ENCODE measurements at regions of chr1 and their contacts with region 1.

Region 1: GRCh38 chr1:145978854-145979759 is 14.6 kb downstream of the POLR3GL start:
- DNase-seq: peak; percentile 87
- H3K4me3 Mint-ChIP-seq: no peak overlapping the region
- H3K27ac Mint-ChIP-seq: no peak overlapping the region
- H3K4me1 Mint-ChIP-seq: peaks cover 9% of the 10 kb centered on the region
- H3K27me3 Mint-ChIP-seq: no peaks in the 10 kb centered on the region
- CTCF ChIP-seq: no peak

Region 2: GRCh38 chr1:145706086-145706680 is 272.9 kb before region 1 on chr1:
- CTCF ChIA-PET with region 1: no interaction called
- intact Hi-C with region 1: no loop called
- DNase-seq: peak; percentile 22
- H3K4me3 Mint-ChIP-seq: no peak overlapping the region
- H3K27ac Mint-ChIP-seq: no peak overlapping the region
- H3K4me1 Mint-ChIP-seq: peaks cover 36% of the 10 kb centered on the region
- H3K27me3 Mint-ChIP-seq: no peaks in the 10 kb centered on the region
- CTCF ChIP-seq: no peak

Region 3: DNA sequence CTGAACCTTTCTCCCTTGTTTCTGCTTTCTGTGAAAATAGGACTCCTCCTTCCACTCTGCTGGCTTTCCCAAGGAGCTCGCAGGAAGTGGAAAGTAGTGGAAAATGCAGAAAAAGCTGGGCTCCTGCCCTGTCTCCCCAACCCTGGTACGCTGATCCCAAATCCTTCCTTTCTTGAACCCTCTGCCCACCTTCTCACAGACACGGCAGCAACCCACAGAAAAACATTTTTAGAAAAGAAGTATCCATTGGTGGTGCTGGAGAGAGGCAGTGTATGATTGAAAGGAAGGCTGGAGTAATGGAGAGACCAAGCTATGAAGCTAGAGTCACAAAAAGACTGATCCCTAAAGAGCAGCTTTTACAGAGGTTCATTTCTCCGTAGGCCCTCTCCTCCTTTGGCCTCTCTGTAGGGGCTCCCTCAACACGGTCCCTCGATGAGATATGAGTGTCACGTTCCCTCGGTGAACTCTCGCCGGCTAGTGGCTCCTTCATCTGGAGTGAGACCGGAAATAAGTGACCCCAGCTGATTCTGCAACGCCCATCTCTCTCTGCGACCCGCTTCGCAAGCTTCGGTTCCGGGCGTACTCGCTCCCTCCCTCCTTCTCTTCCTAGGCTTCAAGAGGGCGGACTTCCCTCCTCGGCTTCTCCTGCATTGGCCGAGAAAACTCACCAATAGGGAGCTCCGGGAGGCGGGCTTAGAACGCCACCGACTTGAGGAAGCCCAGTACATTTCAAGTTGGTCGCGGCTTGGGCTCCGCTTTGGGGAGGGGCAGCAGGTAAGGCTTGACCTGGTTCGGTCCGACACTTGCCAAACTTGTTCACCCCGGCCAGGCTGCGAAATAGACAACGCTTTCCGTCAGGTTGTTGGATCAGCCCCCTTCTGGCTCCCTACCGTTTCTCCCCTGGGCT is 14.9 kb before region 1 on chr1 and contains the starts of genes ANKRD34A and POLR3GL:
- CTCF ChIA-PET with region 1: interaction called, 20 read pairs
- intact Hi-C with region 1: no loop called
- DNase-seq: peak; percentile 94
- H3K4me3 Mint-ChIP-seq: peak within 1 kb of the TSS; percentile 89
- H3K27ac Mint-ChIP-seq: peak within 1 kb of the TSS; percentile 74
- H3K4me1 Mint-ChIP-seq: peaks cover 48% of the 10 kb centered on the region
- H3K27me3 Mint-ChIP-seq: peaks cover 48% of the 10 kb centered on the region
- CTCF ChIP-seq: no peak
- total RNA-seq, gene ANKRD34A: 0.19 and 0.27 TPM in 2 replicates
- total RNA-seq, gene POLR3GL: 9.9 and 11.5 TPM in 2 replicates

Region 4: GRCh38 chr1:146001709-146002108 is 22.6 kb after region 1 on chr1:
- CTCF ChIA-PET with region 1: interaction called, 31 read pairs
- intact Hi-C with region 1: no loop called
- DNase-seq: no peak
- H3K4me3 Mint-ChIP-seq: no peak overlapping the region
- H3K27ac Mint-ChIP-seq: no peak overlapping the region
- H3K4me1 Mint-ChIP-seq: peaks cover 30% of the 10 kb centered on the region
- H3K27me3 Mint-ChIP-seq: no peaks in the 10 kb centered on the region
- CTCF ChIP-seq: no peak

Region 5: DNA sequence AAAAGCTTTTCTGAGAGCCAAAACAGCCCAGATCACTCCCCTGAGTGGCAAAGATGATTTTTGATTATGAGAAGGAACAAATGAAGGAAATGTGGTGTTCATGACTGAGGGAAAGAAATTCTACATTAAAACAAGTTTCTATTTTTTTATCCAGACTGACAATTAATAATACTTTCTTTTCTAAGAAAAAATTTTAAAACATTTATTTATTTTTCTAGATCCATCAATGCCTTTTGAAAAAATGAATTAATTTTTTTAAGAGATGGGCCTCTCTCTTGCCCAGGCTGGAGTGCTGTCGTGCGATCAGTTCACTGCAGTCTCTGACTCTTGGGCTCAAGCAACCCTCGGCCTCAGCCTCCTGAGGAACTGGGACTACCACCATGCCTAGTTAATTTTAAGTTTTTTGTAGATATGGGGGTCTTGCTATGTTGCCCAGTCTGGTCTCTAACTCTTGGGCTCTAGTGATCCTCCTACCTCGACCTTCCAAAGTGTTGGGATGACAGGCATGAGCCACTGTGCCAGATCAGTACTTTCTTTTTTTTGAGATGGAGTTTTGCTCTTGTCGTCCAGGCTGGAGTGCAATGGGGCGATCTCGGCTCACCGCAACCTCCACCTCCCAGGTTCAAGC is 28.5 kb after region 1 on chr1:
- CTCF ChIA-PET with region 1: interaction called, 32 read pairs
- intact Hi-C with region 1: loop called (anchors 1 kb)
- DNase-seq: no peak
- H3K4me3 Mint-ChIP-seq: no peak overlapping the region
- H3K27ac Mint-ChIP-seq: no peak overlapping the region
- H3K4me1 Mint-ChIP-seq: no peaks in the 10 kb centered on the region
- H3K27me3 Mint-ChIP-seq: no peaks in the 10 kb centered on the region
- CTCF ChIP-seq: no peak

Region 6: GRCh38 chr1:146012737-146013403 is 33.8 kb after region 1 on chr1:
- CTCF ChIA-PET with region 1: interaction called, 32 read pairs
- intact Hi-C with region 1: no loop called
- DNase-seq: peak; percentile 74
- H3K4me3 Mint-ChIP-seq: no peak overlapping the region
- H3K27ac Mint-ChIP-seq: peak overlapping the region; percentile 58
- H3K4me1 Mint-ChIP-seq: no peaks in the 10 kb centered on the region
- H3K27me3 Mint-ChIP-seq: peaks cover 26% of the 10 kb centered on the region
- CTCF ChIP-seq: peak; percentile 61